PC-9 (cell line): ENCODE measurements at regions of chr18 and their contacts with region 1.

Region 1: DNA sequence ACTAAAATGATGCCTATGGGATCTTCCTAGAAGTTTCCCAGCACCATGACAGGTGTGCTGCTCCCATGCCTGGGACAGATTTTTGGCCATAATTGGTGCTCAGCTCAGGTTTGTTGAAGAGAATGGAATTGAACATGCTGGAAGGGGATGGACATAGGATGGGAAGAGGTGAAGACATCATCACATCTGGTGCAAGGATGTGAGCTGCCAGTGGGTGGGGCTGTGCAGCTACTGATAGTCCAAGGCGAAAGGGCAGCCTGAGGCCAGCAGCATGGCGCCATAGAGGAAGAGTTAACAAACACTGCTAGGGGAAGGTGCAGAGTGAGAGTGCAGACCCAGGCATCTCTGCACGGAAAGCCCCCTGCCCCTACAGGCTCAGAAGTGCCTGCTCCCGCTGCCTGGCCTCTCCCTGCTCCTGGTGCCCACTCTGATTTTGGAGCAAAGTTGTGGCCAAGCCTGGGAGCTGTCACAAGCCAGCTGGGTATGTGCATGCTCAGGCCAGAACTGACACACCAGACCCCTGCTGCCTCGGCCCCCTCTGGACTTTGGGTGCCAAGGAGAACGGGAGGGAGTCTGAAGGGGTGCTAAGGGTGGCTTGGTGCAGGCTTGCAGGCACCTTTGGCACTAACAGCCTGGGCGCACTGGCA is 178.6 kb downstream of the ZBTB7C start:
- DNase-seq: peak; percentile 55 to 59
- H3K4me3 ChIP-seq: no peak overlapping the region
- H3K27ac ChIP-seq: no peak overlapping the region
- H3K4me1 ChIP-seq: peaks cover 50% of the 10 kb centered on the region
- H3K27me3 ChIP-seq: no peaks in the 10 kb centered on the region
- CTCF ChIP-seq: peak; percentile 77

Region 2: DNA sequence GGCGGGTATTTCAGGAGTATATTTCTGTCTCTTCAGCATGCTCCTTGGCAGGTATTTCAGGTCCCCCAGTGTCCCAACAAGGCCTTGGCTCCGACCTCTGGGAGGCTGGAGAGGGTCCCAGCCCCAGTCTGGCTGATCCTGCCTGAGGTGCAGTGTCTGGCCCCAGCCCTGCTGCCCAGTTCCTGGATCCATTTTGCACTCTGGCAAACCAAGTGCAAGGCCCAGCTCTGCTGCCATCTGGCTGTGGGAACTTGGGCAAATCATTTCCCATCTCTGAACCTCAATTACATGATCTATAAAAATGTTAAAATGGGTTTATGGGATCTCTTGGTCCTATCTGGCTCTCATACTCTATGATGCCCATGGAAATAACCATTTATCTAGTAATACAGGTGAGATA is 115.0 kb after region 1 on chr18:
- CTCF ChIA-PET with region 1: interaction called, 3 read pairs
- POLR2A ChIA-PET with region 1: no interaction called
- intact Hi-C with region 1: loop called (anchors 1 kb)
- DNase-seq: no peak
- H3K4me3 ChIP-seq: no peak overlapping the region
- H3K27ac ChIP-seq: no peak overlapping the region
- H3K4me1 ChIP-seq: no peaks in the 10 kb centered on the region
- H3K27me3 ChIP-seq: no peaks in the 10 kb centered on the region
- CTCF ChIP-seq: peak; percentile 53

Region 3: GRCh38 chr18:48410095-48410920 is 179.7 kb after region 1 on chr18:
- CTCF ChIA-PET with region 1: no interaction called
- POLR2A ChIA-PET with region 1: no interaction called
- intact Hi-C with region 1: loop called (anchors 10 kb)
- DNase-seq: peak; percentile 74 to 80
- H3K4me3 ChIP-seq: peak overlapping the region; percentile 99
- H3K27ac ChIP-seq: no peak overlapping the region
- H3K4me1 ChIP-seq: peaks cover 8% of the 10 kb centered on the region; the same call in 1 of the 2 replicates
- H3K27me3 ChIP-seq: no peaks in the 10 kb centered on the region
- CTCF ChIP-seq: no peak

Region 4: DNA sequence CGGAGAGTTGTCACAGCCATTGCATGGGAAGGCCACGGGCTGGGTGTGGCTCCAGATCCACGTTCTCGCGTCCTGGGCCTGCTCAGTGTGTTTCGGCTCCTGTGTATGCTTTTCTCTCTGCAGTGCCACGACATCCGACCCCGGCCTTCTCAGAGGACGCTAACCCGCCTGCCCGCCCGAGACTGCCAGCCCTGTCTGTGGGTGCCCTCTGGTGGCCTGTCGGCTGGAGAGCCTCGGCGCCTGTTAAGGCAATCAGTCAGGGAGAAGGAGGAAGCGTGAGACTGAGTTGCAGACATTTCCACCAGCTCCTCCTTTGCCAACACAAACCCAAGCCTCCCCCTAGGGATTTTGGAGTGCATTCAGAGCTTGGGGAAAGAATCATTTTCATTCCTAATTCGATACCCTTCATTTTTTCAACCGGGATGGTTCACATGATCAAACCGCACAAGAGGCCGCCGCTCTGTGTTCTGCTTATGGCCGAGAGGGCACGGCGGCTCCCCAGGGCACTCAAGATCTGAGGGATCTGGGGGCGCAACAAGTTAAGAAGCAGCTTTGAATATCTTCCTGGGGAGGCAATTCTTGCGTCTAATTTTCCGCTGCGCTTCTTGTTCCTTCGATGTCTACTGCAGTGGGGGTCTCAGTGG is 216.1 kb after region 1 on chr18:
- CTCF ChIA-PET with region 1: interaction called, 4 read pairs
- POLR2A ChIA-PET with region 1: interaction called, 3 read pairs
- intact Hi-C with region 1: loop called (anchors 1 kb)
- DNase-seq: peak; percentile 69 to 70
- H3K4me3 ChIP-seq: no peak overlapping the region
- H3K27ac ChIP-seq: no peak overlapping the region
- H3K4me1 ChIP-seq: peaks cover 17% of the 10 kb centered on the region
- H3K27me3 ChIP-seq: no peaks in the 10 kb centered on the region
- CTCF ChIP-seq: peak; percentile 91